ENCODE measurements at regions of chr3 and their contacts with region 1.

Region 1: GRCh38 chr3:82743196-82743595 is 981.8 kb upstream of the GBE1 start:
- DNase-seq: no peak
- H3K4me3 ChIP-seq: no peak overlapping the region
- H3K27ac ChIP-seq: no peak overlapping the region
- H3K4me1 ChIP-seq: no peaks in the 10 kb centered on the region
- H3K27me3 ChIP-seq: no peaks in the 10 kb centered on the region
- CTCF ChIP-seq: no peak
- POLR2A ChIP-seq: no peak

Region 2: DNA sequence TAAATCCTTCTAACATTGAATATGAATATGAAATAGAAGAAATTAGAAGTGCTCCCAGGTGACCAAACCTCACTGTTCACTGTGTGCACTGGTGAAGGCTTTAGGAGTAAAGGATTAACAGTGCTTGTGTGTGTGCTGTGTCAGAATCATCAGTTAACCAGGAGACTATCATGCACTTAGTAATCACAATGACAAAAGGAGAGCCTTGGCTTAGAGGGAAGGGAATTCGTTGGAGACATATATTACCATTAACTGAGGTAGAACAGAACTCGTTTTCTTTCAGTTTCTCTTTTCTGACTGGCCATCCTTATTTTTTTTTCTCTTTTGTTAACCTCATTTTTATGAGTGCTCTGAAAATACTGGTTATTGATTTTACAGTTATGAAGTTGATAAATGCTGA is 768.4 kb before region 1 on chr3:
- intact Hi-C with region 1: loop called (anchors 5 kb)
- DNase-seq: no peak
- H3K4me3 ChIP-seq: no peak overlapping the region
- H3K27ac ChIP-seq: no peak overlapping the region
- H3K4me1 ChIP-seq: no peaks in the 10 kb centered on the region
- H3K27me3 ChIP-seq: no peaks in the 10 kb centered on the region
- CTCF ChIP-seq: no peak
- POLR2A ChIP-seq: no peak

Region 3: GRCh38 chr3:82761858-82762257 is 18.7 kb after region 1 on chr3:
- intact Hi-C with region 1: no loop called
- DNase-seq: no peak
- H3K4me3 ChIP-seq: no peak overlapping the region
- H3K27ac ChIP-seq: no peak overlapping the region
- H3K4me1 ChIP-seq: no peaks in the 10 kb centered on the region
- H3K27me3 ChIP-seq: no peaks in the 10 kb centered on the region
- CTCF ChIP-seq: no peak
- POLR2A ChIP-seq: no peak

Region 4: GRCh38 chr3:83131236-83131635 is 388.0 kb after region 1 on chr3:
- intact Hi-C with region 1: no loop called
- DNase-seq: no peak
- H3K4me3 ChIP-seq: no peak overlapping the region
- H3K27ac ChIP-seq: no peak overlapping the region
- H3K4me1 ChIP-seq: no peaks in the 10 kb centered on the region
- H3K27me3 ChIP-seq: no peaks in the 10 kb centered on the region
- CTCF ChIP-seq: no peak
- POLR2A ChIP-seq: no peak